CD4-positive, alpha-beta T cell (primary cell): ENCODE measurements at regions of chr6 and their contacts with region 1.

Region 1: DNA sequence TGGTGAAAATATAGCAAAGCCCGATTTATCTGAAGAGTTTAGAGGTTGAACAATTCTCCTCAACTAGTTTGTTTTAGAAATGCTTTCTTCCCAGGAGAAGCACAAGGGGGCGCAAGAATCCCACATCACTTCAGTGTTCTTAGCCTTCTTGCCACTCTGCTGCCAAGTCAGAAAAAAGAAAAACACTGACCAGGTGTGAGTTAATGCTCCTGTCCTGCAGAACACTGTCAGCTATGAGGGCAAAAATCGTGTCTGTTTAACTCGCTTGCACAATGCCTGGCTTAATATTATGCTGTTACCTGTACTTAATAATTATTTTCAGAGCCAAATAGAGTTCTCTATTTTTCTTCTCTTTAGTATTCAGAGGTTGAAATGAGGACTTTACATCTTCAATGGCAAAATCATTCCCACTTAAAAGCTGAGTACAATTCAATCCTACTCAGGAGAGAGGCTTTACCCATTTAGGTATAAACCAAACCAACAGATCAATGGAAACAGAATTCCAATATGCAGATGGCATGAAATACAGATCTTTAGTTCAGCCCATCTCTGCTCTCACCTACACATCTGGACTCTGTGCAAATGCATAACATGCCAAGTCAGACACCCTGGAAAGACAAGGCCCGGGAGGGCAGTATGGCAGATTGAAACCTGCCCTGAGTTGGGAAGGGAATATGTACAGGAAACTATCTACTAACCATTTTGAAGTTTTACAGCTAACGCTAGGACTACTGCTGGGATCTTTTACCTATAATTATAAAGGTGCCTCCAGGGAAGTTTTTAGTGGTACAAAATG is 71.4 kb upstream of the TULP1 start:
- DNase-seq: peak; percentile 61 to 89 (median 70)
- ATAC-seq: peak; percentile 81
- H3K4me3 ChIP-seq: no peak overlapping the region
- H3K4me3 Mint-ChIP-seq: peak overlapping the region; percentile 69
- H3K27ac ChIP-seq: no peak overlapping the region
- H3K27ac Mint-ChIP-seq: peak overlapping the region; percentile 80
- H3K4me1 ChIP-seq: peaks cover 33% of the 10 kb centered on the region
- H3K4me1 Mint-ChIP-seq: peaks cover 68% of the 10 kb centered on the region
- H3K27me3 ChIP-seq: no peaks in the 10 kb centered on the region
- H3K27me3 Mint-ChIP-seq: no peaks in the 10 kb centered on the region
- CTCF ChIP-seq: peak; percentile 94

Region 2: DNA sequence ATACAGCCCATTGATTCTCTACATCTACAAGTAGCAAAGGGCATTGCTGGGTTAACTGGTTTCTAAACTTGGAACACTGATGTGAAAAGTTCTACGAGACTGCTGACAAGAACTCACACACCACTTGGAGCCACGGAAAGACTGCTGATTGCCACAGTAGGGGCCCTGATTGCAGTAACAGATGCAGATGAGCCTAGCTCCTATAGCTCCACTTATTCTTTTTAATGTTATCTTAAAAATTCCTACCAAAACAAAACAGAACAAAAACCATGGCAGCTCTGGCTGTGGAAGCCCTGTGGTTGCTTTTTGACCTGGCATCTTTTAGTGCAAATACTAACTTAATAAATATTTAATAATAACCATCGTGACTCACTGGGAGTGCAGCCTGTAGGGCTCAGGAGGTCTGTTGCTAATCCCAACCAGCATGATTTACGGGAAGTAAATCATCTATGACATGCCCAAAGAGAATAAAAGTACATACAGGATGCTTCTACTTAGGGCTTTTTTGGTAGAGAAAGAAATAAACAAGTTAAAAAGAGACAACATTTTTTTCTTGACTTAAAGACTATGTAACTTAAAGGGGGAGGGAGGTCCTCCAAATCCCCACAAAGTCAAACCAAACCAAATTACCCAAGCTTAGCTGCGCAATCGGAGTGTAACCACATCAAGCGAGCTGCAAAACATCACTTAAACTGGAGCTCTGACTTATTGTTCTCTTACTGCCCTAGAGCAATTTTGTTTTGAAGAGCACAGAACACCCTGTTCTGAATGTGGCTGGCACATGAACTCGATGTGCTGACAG is 17.4 kb after region 1 on chr6:
- CTCF ChIA-PET with region 1: interaction called, 28 read pairs
- POLR2A ChIA-PET with region 1: interaction called, 181 read pairs
- intact Hi-C with region 1: loop called in 1 of 2 experiments (anchors 2 kb)
- DNase-seq: peak; percentile 50 to 93 (median 64)
- ATAC-seq: peak; percentile 74
- H3K4me3 ChIP-seq: peak overlapping the region; percentile 42
- H3K4me3 Mint-ChIP-seq: peak overlapping the region; percentile 82
- H3K27ac ChIP-seq: peak overlapping the region; percentile 52 to 82
- H3K27ac Mint-ChIP-seq: peak overlapping the region; percentile 85
- H3K4me1 ChIP-seq: peaks cover 70% of the 10 kb centered on the region
- H3K4me1 Mint-ChIP-seq: peaks cover 87% of the 10 kb centered on the region
- H3K27me3 ChIP-seq: no peaks in the 10 kb centered on the region
- H3K27me3 Mint-ChIP-seq: no peaks in the 10 kb centered on the region
- CTCF ChIP-seq: no peak

Region 3: DNA sequence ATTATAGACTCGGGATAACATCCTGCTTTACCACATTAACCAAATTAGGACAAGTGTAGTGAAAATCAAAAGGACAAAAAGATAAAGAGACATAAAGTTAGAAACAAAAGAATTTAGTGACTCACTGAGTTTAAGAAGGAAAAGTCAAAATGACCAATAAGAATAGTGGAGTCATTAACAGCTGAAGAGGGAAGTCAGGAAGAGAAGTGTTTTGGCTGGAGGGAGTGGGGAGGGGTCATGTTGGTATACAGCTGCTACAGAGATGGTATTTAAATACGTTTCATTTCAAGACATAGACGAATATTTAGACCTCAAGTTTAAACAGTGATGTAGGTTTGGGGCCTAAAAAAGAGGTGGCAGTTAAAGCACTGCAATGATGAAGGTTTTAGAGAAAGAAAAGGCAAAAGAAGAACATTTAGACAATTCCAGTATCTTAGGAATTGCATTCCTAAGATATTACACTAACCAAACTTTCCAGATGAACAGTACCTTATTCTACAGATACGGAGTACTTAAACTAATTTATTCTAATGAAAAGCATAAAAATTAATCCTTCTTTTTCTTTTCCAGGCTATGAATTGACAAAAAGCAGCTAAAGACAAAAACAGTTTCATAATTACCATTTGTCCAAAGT is 94.0 kb after region 1 on chr6:
- CTCF ChIA-PET with region 1: interaction called, 3 read pairs
- POLR2A ChIA-PET with region 1: no interaction called
- intact Hi-C with region 1: loop called in 1 of 2 experiments (anchors 5 kb)
- DNase-seq: no peak
- ATAC-seq: peak; percentile 43
- H3K4me3 ChIP-seq: no peak overlapping the region
- H3K4me3 Mint-ChIP-seq: peak overlapping the region; percentile 53
- H3K27ac ChIP-seq: peak overlapping the region in 1 of 2 donors; percentile 23
- H3K27ac Mint-ChIP-seq: peak overlapping the region; percentile 79
- H3K4me1 ChIP-seq: peaks cover 51% of the 10 kb centered on the region
- H3K4me1 Mint-ChIP-seq: peaks cover 93% of the 10 kb centered on the region
- H3K27me3 ChIP-seq: no peaks in the 10 kb centered on the region
- H3K27me3 Mint-ChIP-seq: no peaks in the 10 kb centered on the region
- CTCF ChIP-seq: no peak